Heart left ventricle (tissue), 16 donors: ENCODE measurements at regions of chr17 and their contacts with region 1.

Region 1: GRCh38 chr17:44170499-44171201 is at the start of gene ASB16:
- DNase-seq: peak in 4 of 5 donors; percentile 52 to 80 (median 72)
- ATAC-seq: peak; percentile 60 to 89 (median 82)
- H3K4me3 ChIP-seq: peak within 1 kb of the TSS; percentile 22 to 59 (median 47)
- H3K27ac ChIP-seq: peak within 1 kb of the TSS; percentile 63 to 97 (median 90)
- H3K4me1 ChIP-seq: peaks cover 0 to 32% (median 9%) of the 10 kb centered on the region in 12 donors
- H3K27me3 ChIP-seq: no peaks in the 10 kb centered on the region
- CTCF ChIP-seq: peak in 3 of 12 donors; percentile 7 to 19 (median 17)
- POLR2A ChIP-seq: peak in 1 of 2 donors; percentile 52
- total RNA-seq, gene ASB16: 7.7 to 71.1 (median 13.8) TPM

Region 2: DNA sequence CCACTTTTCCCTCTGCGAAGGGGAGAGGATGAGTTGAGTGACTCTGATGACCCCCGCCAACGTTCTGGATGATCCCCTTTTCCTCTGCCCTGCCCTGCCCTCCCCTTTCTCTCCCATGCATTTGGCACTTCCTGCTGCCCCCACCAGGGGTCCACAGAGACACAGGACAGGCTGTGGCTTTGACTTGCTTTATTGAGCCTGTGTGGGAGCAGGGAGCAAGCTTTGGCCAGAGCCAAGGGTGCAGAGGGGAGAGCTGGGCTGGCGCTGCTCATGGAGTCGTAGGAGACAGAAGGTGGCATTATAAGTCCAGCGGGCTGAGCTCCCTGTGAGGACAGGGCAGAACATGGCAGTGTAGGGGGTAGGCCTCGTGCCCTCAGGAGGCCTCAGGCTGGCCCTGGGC is 230.0 kb before region 1 on chr17:
- intact Hi-C with region 1: loop called in 9 of 10 experiments (anchors 5 to 10 kb)
- DNase-seq: peak in 2 of 5 donors; percentile 38 to 61
- ATAC-seq: peak; percentile 41 to 57 (median 44)
- H3K4me3 ChIP-seq: no peak overlapping the region
- H3K27ac ChIP-seq: no peak overlapping the region
- H3K4me1 ChIP-seq: peaks cover 0 to 11% (median 3%) of the 10 kb centered on the region in 12 donors
- H3K27me3 ChIP-seq: peaks cover 0 to 21% (median 9%) of the 10 kb centered on the region in 9 donors
- CTCF ChIP-seq: peak; percentile 17 to 46 (median 30)
- POLR2A ChIP-seq: no peak

Region 3: GRCh38 chr17:44006598-44007345 is 163.9 kb before region 1 on chr17:
- intact Hi-C with region 1: loop called in 1 of 10 experiments (anchors 2 kb)
- DNase-seq: peak; percentile 96 to 99 (median 98)
- ATAC-seq: peak; percentile 87 to 94 (median 92)
- H3K4me3 ChIP-seq: peak overlapping the region; percentile 44 to 79 (median 67)
- H3K27ac ChIP-seq: peak overlapping the region in 7 of 12 donors; percentile 6 to 66 (median 42)
- H3K4me1 ChIP-seq: peaks cover 8 to 52% (median 33%) of the 10 kb centered on the region in 12 donors
- H3K27me3 ChIP-seq: peaks cover 13 to 30% (median 22%) of the 10 kb centered on the region in 9 donors
- CTCF ChIP-seq: peak in 11 of 12 donors; percentile 36 to 65 (median 55)
- POLR2A ChIP-seq: peak in 1 of 2 donors; percentile 30

Region 4: GRCh38 chr17:44147812-44148211 is 22.8 kb before region 1 on chr17:
- intact Hi-C with region 1: loop called in 1 of 10 experiments (anchors 2 kb)
- DNase-seq: peak in 3 of 5 donors; percentile 10 to 73 (median 55)
- ATAC-seq: peak; percentile 18 to 61 (median 54)
- H3K4me3 ChIP-seq: no peak overlapping the region
- H3K27ac ChIP-seq: peak overlapping the region in 11 of 12 donors; percentile 47 to 89 (median 83)
- H3K4me1 ChIP-seq: peaks cover 0 to 36% (median 14%) of the 10 kb centered on the region in 12 donors
- H3K27me3 ChIP-seq: no peaks in the 10 kb centered on the region
- CTCF ChIP-seq: no peak
- POLR2A ChIP-seq: no peak